ENCODE measurements at regions of chr2 and their contacts with region 1.

Region 1: GRCh38 chr2:237858294-237859081 is 935 bp upstream of the RAMP1 start:
- DNase-seq: peak; percentile 64
- H3K4me3 ChIP-seq: peak overlapping the region in 2 of 4 donors; percentile 49 to 58
- H3K27ac ChIP-seq: peak overlapping the region; percentile 71 to 94 (median 86)
- H3K4me1 ChIP-seq: peaks cover 8 to 45% (median 39%) of the 10 kb centered on the region in 4 donors
- H3K27me3 ChIP-seq: peaks cover 43% of the 10 kb centered on the region
- CTCF ChIP-seq: peak; percentile 61 to 79 (median 67)
- EP300 ChIP-seq: no peak
- POLR2A ChIP-seq: no peak

Region 2: DNA sequence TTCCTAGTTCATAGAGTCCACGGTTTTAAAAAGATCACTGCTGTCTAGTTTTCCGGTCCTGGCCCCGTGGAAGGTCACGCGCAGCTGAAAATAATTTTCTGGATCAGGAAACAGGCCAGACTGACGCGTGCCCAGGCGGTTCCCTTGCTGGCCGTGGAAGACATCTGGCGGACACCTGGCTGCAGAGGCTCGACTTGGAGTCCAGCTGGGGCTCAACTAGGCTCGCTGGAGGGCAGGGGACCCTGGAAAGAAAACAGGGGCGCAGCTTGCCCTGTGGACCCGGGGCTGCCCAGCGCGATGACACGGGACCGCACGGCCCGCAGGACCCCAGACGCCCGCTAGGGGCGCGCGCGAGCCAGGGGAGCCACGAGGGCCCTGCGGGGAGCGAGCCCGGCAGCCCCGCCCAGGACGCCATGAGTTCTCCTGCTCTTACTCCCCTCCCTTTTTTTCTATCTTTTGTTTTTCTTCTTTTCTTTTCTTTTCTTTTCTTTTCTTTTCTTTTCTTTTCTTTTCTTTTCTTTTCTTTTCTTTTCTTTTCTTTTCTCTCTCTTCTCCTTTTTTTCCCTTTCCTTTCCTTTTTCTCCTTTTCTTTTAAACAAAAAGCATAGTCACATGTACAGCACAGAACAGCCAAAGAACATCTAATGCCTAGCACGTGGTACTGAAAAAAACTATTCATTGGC is 65.1 kb after region 1 on chr2:
- in situ Hi-C with region 1: no loop called
- intact Hi-C with region 1: loop called (anchors 10 kb)
- DNase-seq: peak; percentile 68
- H3K4me3 ChIP-seq: peak overlapping the region in 1 of 4 donors; percentile 17
- H3K27ac ChIP-seq: peak overlapping the region; percentile 13 to 83 (median 54)
- H3K4me1 ChIP-seq: peaks cover 0 to 4% (median 0%) of the 10 kb centered on the region in 4 donors
- H3K27me3 ChIP-seq: no peaks in the 10 kb centered on the region
- CTCF ChIP-seq: peak; percentile 80 to 94 (median 90)
- EP300 ChIP-seq: no peak
- POLR2A ChIP-seq: no peak

Region 3: DNA sequence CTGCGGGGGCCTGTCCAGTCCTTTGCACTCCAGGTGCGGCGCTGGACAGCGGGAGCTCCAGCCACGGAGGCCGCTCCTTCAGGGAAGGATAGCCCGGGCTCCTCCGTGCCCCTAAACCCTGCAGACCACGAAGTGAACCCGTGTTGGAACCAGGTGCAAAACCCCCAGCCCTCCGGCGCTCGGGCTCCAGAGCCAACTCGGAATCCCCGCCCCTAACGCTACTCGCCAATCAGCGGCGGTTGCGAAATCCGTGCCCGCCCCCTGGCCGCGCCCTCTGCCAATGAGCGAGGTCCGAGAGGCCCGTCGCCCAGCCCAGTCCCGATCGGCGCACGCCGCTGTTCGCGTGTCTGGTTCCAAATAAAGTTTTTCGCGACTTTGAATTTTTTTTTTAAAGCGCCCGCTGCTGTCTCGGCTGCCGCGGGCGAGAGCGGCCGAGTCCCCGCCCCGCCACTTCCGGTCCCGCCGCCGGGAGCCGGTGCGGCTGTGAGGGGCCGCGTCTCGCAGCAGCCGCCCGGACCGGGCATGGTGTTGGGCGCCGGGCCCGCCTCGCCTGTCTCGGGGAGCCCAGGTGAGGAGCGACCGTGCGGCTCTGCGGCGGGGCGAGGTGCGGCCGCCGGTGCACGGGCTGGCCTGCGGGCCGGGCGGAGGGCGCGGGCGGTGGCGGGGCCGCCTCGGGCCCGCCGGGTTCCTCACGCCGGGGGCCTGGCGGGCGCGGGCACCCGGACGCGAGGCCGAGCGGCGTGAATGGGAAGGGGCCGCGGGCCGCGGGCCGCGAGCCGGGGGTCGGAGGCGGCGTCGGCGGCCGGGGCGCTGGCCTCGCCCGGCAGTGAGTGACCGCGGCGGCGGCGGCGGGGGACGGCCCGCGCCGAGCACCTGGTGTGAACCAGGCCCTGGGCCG is 108.3 kb after region 1 on chr2 and contains the start of gene UBE2F:
- in situ Hi-C with region 1: no loop called
- intact Hi-C with region 1: loop called (anchors 2 kb)
- DNase-seq: peak; percentile 98
- H3K4me3 ChIP-seq: peak within 1 kb of the TSS; percentile 51 to 72 (median 64)
- H3K27ac ChIP-seq: peak within 1 kb of the TSS; percentile 68 to 86 (median 74)
- H3K4me1 ChIP-seq: peaks cover 14 to 27% (median 24%) of the 10 kb centered on the region in 4 donors
- H3K27me3 ChIP-seq: no peaks in the 10 kb centered on the region
- CTCF ChIP-seq: no peak
- EP300 ChIP-seq: no peak
- POLR2A ChIP-seq: peak; percentile 44
- total RNA-seq, gene UBE2F: 66.8 to 79.4 (median 70.5) TPM

Region 4: GRCh38 chr2:238060542-238061314 is 202.2 kb after region 1 on chr2 and contains the start of gene SCLY:
- in situ Hi-C with region 1: no loop called
- intact Hi-C with region 1: loop called (anchors 5 kb)
- DNase-seq: peak; percentile 97
- H3K4me3 ChIP-seq: peak within 1 kb of the TSS; percentile 67 to 96 (median 87)
- H3K27ac ChIP-seq: peak within 1 kb of the TSS; percentile 91 to 94 (median 92)
- H3K4me1 ChIP-seq: peaks cover 5 to 21% (median 18%) of the 10 kb centered on the region in 4 donors
- H3K27me3 ChIP-seq: peaks cover 8% of the 10 kb centered on the region
- CTCF ChIP-seq: no peak
- EP300 ChIP-seq: no peak
- POLR2A ChIP-seq: peak; percentile 82
- total RNA-seq, gene SCLY: 9.4 to 24.3 (median 11.1) TPM

Region 5: DNA sequence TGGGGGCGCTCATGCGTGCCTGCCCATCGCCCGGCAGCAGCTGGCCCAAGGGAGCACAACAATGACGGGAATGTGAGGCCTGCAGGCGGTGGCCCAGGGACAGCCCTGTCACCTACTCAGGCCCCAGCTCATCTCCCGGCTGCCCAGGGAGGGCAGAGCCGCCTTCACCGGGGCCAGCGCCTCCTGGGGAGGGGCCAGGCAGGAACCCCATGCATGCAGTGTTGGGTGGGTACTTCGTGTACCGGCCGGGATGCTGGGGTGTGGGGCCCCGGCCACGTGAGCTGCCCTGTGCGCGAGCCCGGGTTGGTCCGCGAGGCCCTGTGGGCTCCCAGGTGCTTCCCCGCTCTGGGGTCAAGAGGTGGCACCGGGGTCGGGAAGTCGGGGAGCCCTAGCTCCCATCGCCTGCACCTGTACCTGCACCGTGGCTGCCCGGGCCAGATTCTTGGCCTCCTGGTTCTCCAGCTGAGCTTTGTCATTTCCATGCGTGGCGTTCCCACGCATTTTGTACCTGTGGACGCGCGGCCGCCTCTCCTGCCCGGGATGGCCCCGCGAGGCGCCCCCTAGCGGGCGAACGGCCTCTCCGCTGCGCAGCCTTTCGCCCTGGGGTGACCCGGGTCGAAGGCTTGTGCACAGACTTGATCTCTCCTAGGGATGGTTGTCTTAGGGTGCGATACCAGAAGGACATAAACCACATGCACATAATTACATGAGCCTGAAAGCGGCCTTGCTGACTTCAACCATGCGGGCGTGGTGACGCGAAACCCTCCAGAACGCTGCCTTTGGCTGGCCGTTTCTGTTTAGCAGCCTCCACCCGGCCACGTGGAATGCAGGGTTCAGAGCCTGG is 280.9 kb after region 1 on chr2:
- in situ Hi-C with region 1: no loop called
- intact Hi-C with region 1: loop called (anchors 10 kb)
- DNase-seq: no peak
- H3K4me3 ChIP-seq: peak overlapping the region in 1 of 4 donors; percentile 1
- H3K27ac ChIP-seq: no peak overlapping the region
- H3K4me1 ChIP-seq: peaks cover 7 to 36% (median 29%) of the 10 kb centered on the region in 4 donors
- H3K27me3 ChIP-seq: peaks cover 5% of the 10 kb centered on the region
- CTCF ChIP-seq: peak; percentile 45 to 62 (median 47)
- EP300 ChIP-seq: no peak
- POLR2A ChIP-seq: no peak

Region 6: GRCh38 chr2:238263204-238264071 is 404.9 kb after region 1 on chr2:
- in situ Hi-C with region 1: loop called in 3 of 4 experiments (anchors 10 to 25 kb)
- intact Hi-C with region 1: loop called (anchors 10 kb)
- DNase-seq: peak; percentile 94
- H3K4me3 ChIP-seq: no peak overlapping the region
- H3K27ac ChIP-seq: peak overlapping the region; percentile 64 to 74 (median 68)
- H3K4me1 ChIP-seq: peaks cover 12 to 24% (median 17%) of the 10 kb centered on the region in 4 donors
- H3K27me3 ChIP-seq: no peaks in the 10 kb centered on the region
- CTCF ChIP-seq: peak; percentile 74 to 93 (median 81)
- EP300 ChIP-seq: no peak
- POLR2A ChIP-seq: no peak

Region 7: GRCh38 chr2:239329284-239329971 is 1470.9 kb after region 1 on chr2:
- in situ Hi-C with region 1: no loop called
- intact Hi-C with region 1: no loop called
- DNase-seq: peak; percentile 65
- H3K4me3 ChIP-seq: no peak overlapping the region
- H3K27ac ChIP-seq: peak overlapping the region; percentile 74 to 90 (median 82)
- H3K4me1 ChIP-seq: peaks cover 32 to 41% (median 36%) of the 10 kb centered on the region in 4 donors
- H3K27me3 ChIP-seq: no peaks in the 10 kb centered on the region
- CTCF ChIP-seq: no peak
- EP300 ChIP-seq: peak; percentile 82
- POLR2A ChIP-seq: no peak

Measured in transverse colon (tissue), 4 donors.